Mammary epithelial cell (primary cell): ENCODE measurements at regions of chr3 and their contacts with region 1.

Region 1: GRCh38 chr3:63753567-63753966 is 65.5 kb upstream of the C3orf49 start:
- DNase-seq: peak; percentile 24
- H3K4me3 ChIP-seq: no peak overlapping the region
- H3K27ac ChIP-seq: no peak overlapping the region
- H3K4me1 ChIP-seq: no peaks in the 10 kb centered on the region
- H3K27me3 ChIP-seq: no peaks in the 10 kb centered on the region
- CTCF ChIP-seq: no peak

Region 2: GRCh38 chr3:63674586-63674985 is 79.0 kb before region 1 on chr3:
- CTCF ChIA-PET with region 1: no interaction called
- dilution Hi-C with region 1: no loop called
- in situ Hi-C with region 1: no loop called
- intact Hi-C with region 1: loop called (anchors 5 kb)
- DNase-seq: no peak
- H3K4me3 ChIP-seq: no peak overlapping the region
- H3K27ac ChIP-seq: no peak overlapping the region
- H3K4me1 ChIP-seq: peaks cover 16% of the 10 kb centered on the region
- H3K27me3 ChIP-seq: no peaks in the 10 kb centered on the region
- CTCF ChIP-seq: no peak